ENCODE measurements at regions of chr4 and their contacts with region 1.

Region 1: DNA sequence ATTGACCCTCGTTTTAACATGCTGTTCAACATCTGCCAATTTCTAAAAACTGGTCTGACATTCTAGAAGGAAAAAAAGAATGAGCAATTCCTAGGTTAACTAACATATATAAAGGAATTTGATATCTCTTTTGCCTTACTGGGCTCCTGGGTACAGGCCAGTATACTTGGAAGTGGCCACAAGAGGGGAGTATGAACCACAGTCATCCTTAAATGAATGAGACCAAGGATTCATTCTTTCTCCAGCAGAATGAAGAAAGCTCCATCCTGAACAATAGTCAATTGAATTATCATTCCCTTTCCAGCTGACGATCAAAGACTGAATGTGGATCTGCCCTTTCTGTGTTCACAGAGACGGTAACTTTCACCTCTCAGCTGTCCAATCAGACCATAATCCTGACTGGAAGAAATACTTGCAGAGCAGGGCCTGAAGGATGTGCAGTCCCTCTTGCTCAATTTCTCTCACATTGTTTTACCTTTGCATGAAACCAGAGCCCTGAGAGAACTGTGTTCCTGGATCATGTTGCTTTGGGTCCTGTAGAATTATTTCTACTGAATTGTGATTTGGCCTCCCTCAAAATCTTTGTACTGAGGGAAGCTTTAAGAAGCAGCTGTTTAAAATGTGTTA is 14.8 kb upstream of the SPARCL1 start:
- DNase-seq: no peak
- ATAC-seq: peak in 3 of 4 donors; percentile 37 to 58 (median 51)
- H3K4me3 ChIP-seq: no peak overlapping the region
- H3K27ac ChIP-seq: no peak overlapping the region
- H3K4me1 ChIP-seq: no peaks in the 10 kb centered on the region
- H3K27me3 ChIP-seq: no peaks in the 10 kb centered on the region
- CTCF ChIP-seq: peak; percentile 49

Region 2: GRCh38 chr4:87422104-87423052 is 121.6 kb before region 1 on chr4 and contains the start of gene NUDT9:
- intact Hi-C with region 1: no loop called
- DNase-seq: peak; percentile 98
- ATAC-seq: peak; percentile 96 to 97 (median 96)
- H3K4me3 ChIP-seq: peak within 1 kb of the TSS; percentile 86
- H3K27ac ChIP-seq: peak within 1 kb of the TSS; percentile 94
- H3K4me1 ChIP-seq: peaks cover 5% of the 10 kb centered on the region
- H3K27me3 ChIP-seq: no peaks in the 10 kb centered on the region
- CTCF ChIP-seq: no peak
- total RNA-seq, gene NUDT9: 20.5 to 33.3 (median 24.0) TPM

Region 3: DNA sequence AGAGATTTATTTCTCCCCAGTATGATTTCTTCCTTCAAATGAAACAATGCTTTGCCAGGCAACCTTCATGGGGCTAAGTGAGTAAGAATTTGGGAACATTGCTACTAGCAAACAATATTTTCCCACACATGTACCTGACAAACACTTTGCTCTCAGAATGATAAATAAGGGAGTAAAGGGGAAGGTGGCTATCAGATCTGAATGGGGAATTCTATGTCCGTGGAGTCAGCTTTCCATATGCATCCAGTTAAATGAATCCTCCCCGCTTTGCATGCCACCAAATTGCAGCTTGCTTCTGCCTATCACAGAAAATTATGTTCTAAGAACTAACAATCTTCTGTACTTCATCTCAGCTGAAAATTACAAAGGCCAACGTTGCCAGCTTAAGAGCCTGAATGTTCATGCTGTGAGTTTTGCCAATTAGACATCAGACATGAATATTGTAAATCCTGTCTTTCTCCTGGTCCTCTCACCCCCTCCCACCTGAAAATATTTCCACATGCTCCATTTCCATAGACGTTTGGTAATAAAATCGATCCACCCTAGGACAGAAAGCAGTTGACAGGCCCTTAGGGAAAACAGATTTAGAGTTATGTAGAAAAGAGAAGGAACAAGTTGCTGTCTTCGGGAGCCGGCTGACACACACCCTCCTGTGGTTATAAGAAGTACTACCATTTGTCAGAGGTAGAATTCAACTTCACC is 295.1 kb after region 1 on chr4:
- intact Hi-C with region 1: loop called in 1 of 2 experiments (anchors 5 kb)
- DNase-seq: peak in 1 of 2 donors; percentile 17
- ATAC-seq: peak in 2 of 4 donors; percentile 52 to 76
- H3K4me3 ChIP-seq: no peak overlapping the region
- H3K27ac ChIP-seq: no peak overlapping the region
- H3K4me1 ChIP-seq: no peaks in the 10 kb centered on the region
- H3K27me3 ChIP-seq: no peaks in the 10 kb centered on the region
- CTCF ChIP-seq: peak; percentile 66

Measured in psoas muscle (tissue), 8 donors.